ENCODE measurements at regions of chr16 and their contacts with region 1.

Region 1: DNA sequence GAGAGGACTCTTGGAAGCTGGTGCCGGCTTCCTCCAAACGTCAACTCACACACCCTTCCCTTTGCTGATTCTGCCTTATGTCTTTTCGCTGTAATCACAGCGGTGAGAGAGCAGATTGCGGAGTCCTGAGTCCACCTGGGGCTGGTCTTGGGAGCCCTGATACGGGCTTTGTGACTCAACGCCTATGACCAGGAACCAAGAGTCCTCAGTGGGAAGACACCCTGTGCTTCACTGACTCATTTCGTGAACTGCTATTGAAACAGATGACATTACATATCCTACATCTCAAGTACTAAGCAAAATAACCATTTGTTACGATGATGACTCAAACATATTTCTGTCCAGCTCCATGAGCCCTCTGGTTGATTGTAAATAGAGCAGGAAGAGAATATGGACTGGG is 90.7 kb upstream of the CREBBP start:
- DNase-seq: no peak
- H3K4me3 ChIP-seq: no peak overlapping the region
- H3K27ac ChIP-seq: no peak overlapping the region
- H3K4me1 ChIP-seq: peaks cover 0 to 7% of the 10 kb centered on the region in 2 donors
- H3K27me3 ChIP-seq: no peaks in the 10 kb centered on the region
- CTCF ChIP-seq: no peak

Region 2: GRCh38 chr16:3938848-3939624 is 32.2 kb before region 1 on chr16:
- intact Hi-C with region 1: loop called (anchors 5 kb)
- DNase-seq: no peak
- H3K4me3 ChIP-seq: peak overlapping the region; percentile 53 to 80
- H3K27ac ChIP-seq: no peak overlapping the region
- H3K4me1 ChIP-seq: peaks cover 0 to 5% of the 10 kb centered on the region in 2 donors
- H3K27me3 ChIP-seq: no peaks in the 10 kb centered on the region
- CTCF ChIP-seq: peak; percentile 80 to 99 (median 99)